GM10248 (cell line): ENCODE measurements at regions of chr2 and their contacts with region 1.

Region 1: DNA sequence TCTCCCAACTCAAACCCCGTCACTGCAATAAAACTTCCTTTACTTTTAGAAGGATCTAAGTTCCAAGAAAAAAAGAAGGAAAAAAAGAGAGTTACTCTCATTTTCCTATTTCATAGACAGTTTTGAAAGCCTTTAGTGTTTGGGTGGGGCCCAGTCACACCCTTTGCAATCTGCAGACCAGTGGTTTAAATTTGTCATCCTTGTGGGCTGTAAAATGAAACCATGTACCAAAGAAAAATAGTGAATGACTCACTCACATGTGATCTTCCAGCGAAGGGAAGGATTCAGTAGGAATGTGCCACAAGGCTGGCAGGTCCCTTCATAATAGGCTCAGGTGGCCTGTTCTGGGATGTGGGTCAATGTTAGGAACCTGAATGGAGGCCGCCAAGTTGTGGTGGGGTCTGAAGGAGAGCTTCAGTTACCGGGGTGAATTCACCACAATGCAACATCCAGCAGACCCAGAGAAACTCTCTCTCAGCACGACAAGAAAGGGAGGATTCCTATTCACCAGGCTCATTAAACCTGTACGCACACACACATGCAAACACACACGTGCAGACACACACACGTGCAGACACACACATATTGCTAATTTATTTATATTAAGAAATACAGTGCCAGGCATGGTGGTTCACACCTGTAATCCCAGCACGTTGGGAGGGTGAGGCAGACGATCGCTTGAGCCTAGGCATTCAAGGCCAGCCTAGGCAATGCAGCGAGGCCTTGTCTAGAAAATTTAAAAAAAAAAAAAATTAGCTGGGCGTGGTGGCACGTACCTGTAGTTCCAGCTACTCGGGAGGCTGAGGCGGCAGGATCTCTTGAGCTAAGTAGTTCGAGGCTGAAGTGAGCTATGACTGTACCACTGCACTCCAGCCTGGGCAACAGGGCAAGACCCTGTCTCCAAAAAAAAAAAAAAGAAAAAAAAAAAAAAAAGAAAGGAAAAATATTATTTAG is 28.5 kb downstream of the ANXA4 start:
- DNase-seq: no peak
- CTCF ChIP-seq: no peak

Region 2: GRCh38 chr2:69781321-69782248 is 11.1 kb after region 1 on chr2:
- CTCF ChIA-PET with region 1: interaction called, 10 read pairs
- POLR2A ChIA-PET with region 1: no interaction called
- DNase-seq: no peak
- CTCF ChIP-seq: no peak